A549 (cell line): ENCODE measurements at regions of chr4 and their contacts with region 1.

Region 1: DNA sequence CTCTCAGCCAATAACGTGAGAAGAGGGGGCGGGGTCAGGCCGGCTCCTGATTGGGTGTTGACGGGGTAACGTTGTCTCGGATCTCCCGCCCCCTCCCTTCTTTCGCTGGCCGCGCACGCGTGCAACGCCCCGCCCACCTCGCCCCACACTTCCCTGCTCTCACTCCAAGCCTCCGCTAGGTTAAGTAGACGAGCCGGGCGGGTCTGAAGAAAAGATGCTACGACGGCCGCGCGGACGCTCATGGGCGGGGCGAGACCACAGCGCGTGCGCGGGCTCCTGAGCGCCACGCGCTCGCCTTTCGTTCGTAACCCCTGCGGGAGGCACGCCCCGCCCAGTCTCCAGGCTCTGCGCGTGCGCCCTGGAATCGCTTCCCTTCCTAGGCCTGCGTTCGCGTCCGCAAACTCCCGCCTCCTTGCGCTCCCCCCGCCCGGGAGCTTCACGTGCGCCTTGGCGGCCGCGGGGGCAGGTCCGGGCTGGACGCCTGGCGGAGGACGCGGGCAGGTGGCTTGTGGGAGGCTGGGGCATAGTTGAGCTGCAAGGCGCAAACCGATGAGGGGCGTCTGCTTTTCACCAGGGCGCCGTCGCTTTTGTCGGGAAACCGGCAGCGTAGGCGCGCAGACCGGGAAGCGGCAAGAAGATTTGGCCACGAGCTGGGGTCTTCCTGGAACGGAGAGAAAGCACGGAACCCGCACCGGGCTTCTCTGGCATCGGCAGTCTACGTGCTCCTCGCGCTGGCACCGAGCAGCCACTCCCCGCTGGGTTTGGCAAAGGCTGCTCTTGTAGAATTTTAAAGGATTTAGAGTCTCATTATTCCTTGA is 467 bp upstream of the PGRMC2 start:
- DNase-seq: peak; percentile 83 to 98
- ATAC-seq: peak; percentile 80 to 87
- H3K4me3 ChIP-seq: peak overlapping the region; percentile 79
- H3K27ac ChIP-seq: peak overlapping the region; percentile 94 to 99
- H3K4me1 ChIP-seq: peaks cover 24% of the 10 kb centered on the region
- CTCF ChIP-seq: no peak
- EP300 ChIP-seq: no peak
- POLR2A ChIP-seq: peak; percentile 75
- RAD21 ChIP-seq: peak in 1 of 2 experiments; percentile 38; a peak in 3 of 5 replicates

Region 2: GRCh38 chr4:128303986-128304385 is 15.9 kb after region 1 on chr4:
- CTCF ChIA-PET with region 1: no interaction called
- POLR2A ChIA-PET with region 1: no interaction called
- DNase-seq: no peak
- ATAC-seq: no peak
- H3K4me3 ChIP-seq: no peak overlapping the region
- H3K27ac ChIP-seq: no peak overlapping the region
- H3K4me1 ChIP-seq: no peaks in the 10 kb centered on the region
- CTCF ChIP-seq: no peak
- EP300 ChIP-seq: no peak
- POLR2A ChIP-seq: no peak
- RAD21 ChIP-seq: no peak

Region 3: DNA sequence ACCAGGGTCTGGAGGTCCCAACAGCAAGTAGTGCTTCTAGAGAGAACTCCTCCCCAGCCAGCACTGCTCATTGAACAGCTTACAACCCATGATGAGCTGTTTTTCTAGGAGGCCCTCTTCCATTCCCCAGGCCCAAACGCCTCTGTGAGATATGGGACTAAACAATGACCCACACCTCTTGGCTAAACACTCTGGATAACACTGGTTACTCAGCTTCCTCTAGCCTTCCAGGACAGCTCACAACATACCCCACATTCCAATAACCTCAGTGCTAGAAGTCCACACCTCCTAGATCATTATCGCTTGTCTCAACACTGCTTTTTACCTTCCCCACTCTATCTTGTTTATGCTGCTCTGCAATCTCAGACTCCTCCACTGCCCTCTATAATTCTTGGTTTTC is 34.9 kb after region 1 on chr4:
- CTCF ChIA-PET with region 1: no interaction called
- POLR2A ChIA-PET with region 1: interaction called, 18 read pairs
- DNase-seq: peak; percentile 4 to 75
- ATAC-seq: peak; percentile 89 to 94
- H3K4me3 ChIP-seq: no peak overlapping the region
- H3K27ac ChIP-seq: peak overlapping the region; percentile 88 to 92
- H3K4me1 ChIP-seq: peaks cover 36% of the 10 kb centered on the region
- CTCF ChIP-seq: no peak
- EP300 ChIP-seq: no peak
- POLR2A ChIP-seq: no peak
- RAD21 ChIP-seq: no peak